Gastrocnemius medialis (tissue), 4 donors: ENCODE measurements at regions of chr3 and their contacts with region 1.

Region 1: GRCh38 chr3:187913617-187914291 is 168.5 kb upstream of the BCL6 start:
- DNase-seq: no peak
- ATAC-seq: no peak
- H3K4me3 ChIP-seq: no peak overlapping the region
- H3K27ac ChIP-seq: peak overlapping the region; percentile 78 to 94 (median 80)
- H3K4me1 ChIP-seq: peaks cover 59 to 62% of the 10 kb centered on the region in 2 donors
- H3K27me3 ChIP-seq: no peaks in the 10 kb centered on the region
- CTCF ChIP-seq: no peak
- POLR2A ChIP-seq: no peak

Region 2: DNA sequence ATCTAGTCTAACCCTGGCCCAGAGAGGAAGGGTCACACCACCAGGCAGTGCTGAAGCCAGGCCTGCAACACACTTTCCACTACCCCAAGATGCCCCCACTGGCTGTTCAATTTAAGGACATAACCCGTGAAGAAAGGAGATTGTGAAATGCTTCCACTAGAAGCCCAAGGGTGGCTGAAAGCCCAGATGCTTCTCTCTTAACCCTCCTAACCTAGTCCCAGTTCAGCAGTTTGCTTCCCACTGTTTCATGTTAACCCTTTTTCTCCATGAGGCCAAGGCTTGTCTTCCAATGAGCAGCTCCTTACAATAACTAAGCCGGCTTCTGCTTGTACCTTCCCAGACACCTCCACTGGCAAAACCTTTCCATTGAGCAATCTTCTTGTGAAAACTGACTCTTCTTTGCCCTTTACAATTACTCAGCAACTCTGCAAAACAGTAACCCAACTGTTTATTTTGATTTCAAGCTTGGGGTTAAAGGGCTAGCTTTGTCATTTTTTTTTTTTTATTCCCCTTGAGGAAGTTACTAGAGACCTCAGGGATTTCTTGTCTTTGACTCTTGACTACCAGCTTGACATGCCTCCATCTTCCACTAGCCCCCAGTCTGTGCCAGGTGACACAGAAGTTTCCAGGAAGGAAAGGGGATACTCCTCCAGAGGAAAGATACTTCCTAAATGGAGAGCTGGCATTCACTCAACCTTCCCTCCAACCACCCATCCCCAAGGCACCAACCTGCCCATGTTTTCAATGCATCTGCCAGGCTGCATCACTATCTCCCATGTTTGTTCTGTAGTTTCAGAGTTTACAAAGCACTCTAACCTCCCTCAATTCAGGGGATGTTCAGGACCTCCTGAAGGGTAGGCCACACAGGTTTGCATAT is 41.6 kb after region 1 on chr3:
- in situ Hi-C with region 1: no loop called
- intact Hi-C with region 1: loop called (anchors 2 kb)
- DNase-seq: peak; percentile 43 to 85
- ATAC-seq: peak; percentile 68 to 70
- H3K4me3 ChIP-seq: no peak overlapping the region
- H3K27ac ChIP-seq: peak overlapping the region; percentile 83 to 96 (median 94)
- H3K4me1 ChIP-seq: peaks cover 58 to 79% of the 10 kb centered on the region in 2 donors
- H3K27me3 ChIP-seq: no peaks in the 10 kb centered on the region
- CTCF ChIP-seq: no peak
- POLR2A ChIP-seq: no peak

Region 3: GRCh38 chr3:188006726-188007393 is 93.1 kb after region 1 on chr3:
- in situ Hi-C with region 1: no loop called
- intact Hi-C with region 1: loop called (anchors 2 kb)
- DNase-seq: peak; percentile 87 to 97
- ATAC-seq: peak; percentile 86 to 90
- H3K4me3 ChIP-seq: peak overlapping the region; percentile 12 to 42 (median 26)
- H3K27ac ChIP-seq: peak overlapping the region; percentile 88 to 97 (median 90)
- H3K4me1 ChIP-seq: peaks cover 9 to 18% of the 10 kb centered on the region in 2 donors
- H3K27me3 ChIP-seq: no peaks in the 10 kb centered on the region
- CTCF ChIP-seq: peak in 2 of 5 experiments; percentile 4 to 23
- POLR2A ChIP-seq: peak; percentile 36 to 72